ENCODE measurements at regions of chr6 and their contacts with region 1.

Region 1: GRCh38 chr6:7300926-7301325 is 12.1 kb downstream of the SSR1 start:
- DNase-seq: no peak
- H3K4me3 ChIP-seq: no peak overlapping the region
- H3K4me1 ChIP-seq: no peaks in the 10 kb centered on the region
- H3K27me3 ChIP-seq: no peaks in the 10 kb centered on the region

Region 2: DNA sequence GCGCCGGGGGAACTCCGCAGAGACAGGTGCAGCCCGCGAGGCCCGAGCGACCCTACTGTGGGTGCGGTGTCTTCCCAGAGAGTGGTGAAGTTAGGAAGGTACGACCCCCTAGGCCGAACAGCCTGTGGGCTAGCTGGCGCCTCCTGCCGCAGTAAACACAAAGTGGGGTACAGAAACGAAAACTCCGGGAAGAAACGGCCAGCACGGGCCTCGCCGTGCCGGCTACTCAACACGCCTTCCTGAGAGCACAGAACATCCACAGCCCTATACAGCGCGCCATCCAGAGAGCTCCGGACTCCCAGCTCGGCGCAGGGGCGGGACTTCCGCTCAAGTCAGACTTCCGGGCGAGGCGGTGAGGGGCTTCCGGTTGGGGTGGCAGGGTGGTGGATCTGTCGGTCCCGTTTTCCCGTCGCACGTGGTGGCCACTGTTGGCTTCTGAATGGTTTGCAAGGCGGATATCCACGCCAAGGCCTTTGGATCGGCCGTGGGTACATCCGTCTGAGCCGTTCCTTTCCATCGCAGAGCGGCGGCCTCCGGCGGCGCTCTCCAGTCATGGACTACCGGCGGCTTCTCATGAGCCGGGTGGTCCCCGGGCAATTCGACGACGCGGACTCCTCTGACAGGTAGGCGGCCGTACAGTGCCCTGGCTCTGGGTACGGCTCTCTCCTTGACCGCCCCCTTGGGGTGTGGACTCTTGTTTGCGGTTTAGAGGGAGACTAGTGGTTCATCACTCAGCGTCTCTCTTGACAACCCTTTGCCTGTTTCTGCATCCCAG is 88.7 kb after region 1 on chr6 and contains the starts of genes CAGE1 and RIOK1:
- in situ Hi-C with region 1: loop called (anchors 5 kb)
- DNase-seq: peak; percentile 81 to 97
- H3K4me3 ChIP-seq: peak within 1 kb of the TSS; percentile 77
- H3K4me1 ChIP-seq: peaks cover 14% of the 10 kb centered on the region
- H3K27me3 ChIP-seq: no peaks in the 10 kb centered on the region

Region 3: DNA sequence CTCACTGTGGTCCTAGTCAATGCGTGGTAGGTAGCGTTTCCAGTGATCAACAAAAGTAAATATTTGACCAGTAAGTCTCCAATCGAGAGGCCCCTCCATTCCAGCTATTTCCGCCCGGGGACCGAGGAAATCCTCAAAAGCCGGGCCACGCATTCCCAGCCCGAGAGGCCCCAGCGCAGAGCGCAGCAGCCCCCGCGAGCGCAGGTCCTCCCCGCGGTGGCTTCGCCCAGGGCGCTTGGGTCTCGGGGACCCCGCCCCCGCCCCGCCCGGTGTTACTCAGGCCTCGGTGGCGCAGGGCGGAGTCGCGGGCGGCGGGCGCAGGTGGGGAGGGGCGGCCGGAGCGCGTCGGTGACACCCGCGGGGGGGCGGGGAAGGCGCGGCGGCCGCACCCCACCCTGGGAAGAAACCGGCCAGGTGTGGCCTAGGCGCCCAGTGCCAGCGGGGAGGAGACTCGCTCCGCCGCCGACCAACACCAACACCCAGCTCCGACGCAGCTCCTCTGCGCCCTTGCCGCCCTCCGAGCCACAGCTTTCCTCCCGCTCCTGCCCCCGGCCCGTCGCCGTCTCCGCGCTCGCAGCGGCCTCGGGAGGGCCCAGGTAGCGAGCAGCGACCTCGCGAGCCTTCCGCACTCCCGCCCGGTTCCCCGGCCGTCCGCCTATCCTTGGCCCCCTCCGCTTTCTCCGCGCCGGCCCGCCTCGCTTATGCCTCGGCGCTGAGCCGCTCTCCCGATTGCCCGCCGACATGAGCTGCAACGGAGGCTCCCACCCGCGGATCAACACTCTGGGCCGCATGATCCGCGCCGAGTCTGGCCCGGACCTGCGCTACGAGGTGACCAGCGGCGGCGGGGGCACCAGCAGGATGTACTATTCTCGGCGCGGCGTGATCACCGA is 240.5 kb after region 1 on chr6 and contains the start of gene DSP:
- in situ Hi-C with region 1: no loop called
- DNase-seq: peak; percentile 41 to 80
- H3K4me3 ChIP-seq: peak within 1 kb of the TSS; percentile 78
- H3K4me1 ChIP-seq: peaks cover 22% of the 10 kb centered on the region
- H3K27me3 ChIP-seq: no peaks in the 10 kb centered on the region

Measured in HAP-1 (cell line).